GM13976 (cell line): ENCODE measurements at regions of chr12 and their contacts with region 1.

Region 1: GRCh38 chr12:76455582-76456345 is 103.8 kb downstream of the OSBPL8 start:
- DNase-seq: peak; percentile 47
- CTCF ChIP-seq: peak; percentile 52

Region 2: GRCh38 chr12:75722714-75723200 is 733.0 kb before region 1 on chr12:
- in situ Hi-C with region 1: no loop called
- DNase-seq: peak; percentile 43
- CTCF ChIP-seq: no peak

Region 3: DNA sequence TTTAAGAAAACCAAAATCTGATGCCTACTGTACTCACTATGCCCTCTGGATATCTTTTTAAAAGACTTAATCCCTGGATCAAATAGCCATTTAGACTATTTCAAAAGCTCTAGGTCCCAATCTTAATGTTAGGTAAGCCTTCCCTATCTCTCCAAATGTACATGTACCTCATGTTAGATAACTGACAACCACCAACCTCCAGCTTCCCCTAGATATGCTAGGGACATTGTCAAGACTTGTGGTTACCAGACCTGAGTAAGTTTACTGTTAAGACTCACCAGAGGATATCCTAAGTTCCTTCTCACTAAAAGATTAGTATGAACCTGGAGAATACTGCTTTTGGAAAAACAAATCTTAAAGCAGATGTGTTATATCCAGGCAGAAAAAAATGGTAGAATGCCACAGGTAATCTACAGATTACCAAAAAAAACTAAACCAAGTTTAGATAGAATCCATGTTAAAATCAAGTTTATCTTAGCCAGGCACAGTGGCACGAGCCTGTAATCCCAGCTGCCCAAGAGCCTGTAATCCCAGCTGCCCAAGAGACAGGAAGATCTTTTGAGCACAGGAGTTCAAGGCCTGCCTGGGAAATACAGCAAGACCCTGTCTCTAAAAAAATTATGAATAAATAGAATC is 380.9 kb before region 1 on chr12:
- in situ Hi-C with region 1: loop called (anchors 25 kb)
- DNase-seq: no peak
- CTCF ChIP-seq: no peak

Region 4: DNA sequence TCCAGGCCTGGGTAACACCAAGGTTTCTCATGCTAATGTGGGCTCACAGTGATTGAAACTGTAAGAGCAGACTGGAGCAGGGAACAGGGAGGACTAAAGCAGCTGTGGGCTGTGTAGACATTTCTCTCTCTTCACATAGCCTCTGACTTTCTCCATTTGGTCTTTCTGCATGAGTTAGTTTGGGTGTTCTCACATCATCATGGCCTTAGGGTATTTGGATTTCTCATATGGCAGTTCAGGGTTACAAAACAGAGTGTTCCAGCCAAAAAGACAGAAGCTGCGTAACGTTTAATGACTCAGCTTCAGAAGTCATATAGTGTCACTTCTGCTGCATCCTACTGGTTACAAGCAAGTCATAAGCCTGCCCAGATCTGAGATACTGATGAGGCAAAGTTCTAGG is 155.8 kb after region 1 on chr12:
- in situ Hi-C with region 1: no loop called
- DNase-seq: no peak
- CTCF ChIP-seq: no peak